Colonic mucosa (tissue), 4 donors: ENCODE measurements at regions of chrX and their contacts with region 1.

Region 1: GRCh38 chrX:132615391-132616131 is 126.7 kb upstream of the MBNL3 start:
- DNase-seq: peak; percentile 53
- H3K4me3 ChIP-seq: no peak overlapping the region
- H3K27ac ChIP-seq: no peak overlapping the region
- H3K4me1 ChIP-seq: no peaks in the 10 kb centered on the region
- H3K27me3 ChIP-seq: no peaks in the 10 kb centered on the region
- CTCF ChIP-seq: peak; percentile 24

Region 2: GRCh38 chrX:132092439-132093065 is 523.0 kb before region 1 on chrX:
- intact Hi-C with region 1: loop called (anchors 5 kb)
- DNase-seq: peak; percentile 52
- H3K4me3 ChIP-seq: no peak overlapping the region
- H3K27ac ChIP-seq: no peak overlapping the region
- H3K4me1 ChIP-seq: no peaks in the 10 kb centered on the region
- H3K27me3 ChIP-seq: no peaks in the 10 kb centered on the region
- CTCF ChIP-seq: peak; percentile 83

Region 3: DNA sequence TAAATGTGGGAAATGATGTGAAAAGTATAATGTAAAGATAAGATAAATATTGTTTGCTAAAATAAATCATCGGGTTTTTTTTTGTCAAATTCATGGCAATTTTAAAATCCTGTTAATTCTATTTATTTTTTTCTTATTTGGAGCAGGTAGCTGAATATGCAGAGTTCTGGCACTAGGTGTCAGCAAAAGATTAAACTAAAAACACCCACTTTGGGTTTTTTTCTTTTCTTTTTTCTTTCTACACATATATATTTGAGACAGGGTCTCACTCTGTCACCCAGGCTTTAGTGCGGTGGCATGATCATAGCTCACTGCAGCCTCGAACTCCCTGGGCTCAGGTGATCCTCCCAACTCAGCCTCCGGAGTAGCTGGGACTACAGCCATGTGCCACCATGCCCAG is 389.4 kb before region 1 on chrX:
- intact Hi-C with region 1: loop called (anchors 5 kb)
- DNase-seq: no peak
- H3K4me3 ChIP-seq: no peak overlapping the region
- H3K27ac ChIP-seq: no peak overlapping the region
- H3K4me1 ChIP-seq: no peaks in the 10 kb centered on the region
- H3K27me3 ChIP-seq: no peaks in the 10 kb centered on the region
- CTCF ChIP-seq: peak; percentile 13

Region 4: GRCh38 chrX:132292793-132293192 is 322.8 kb before region 1 on chrX:
- intact Hi-C with region 1: loop called (anchors 5 kb)
- DNase-seq: peak; percentile 24
- H3K4me3 ChIP-seq: no peak overlapping the region
- H3K27ac ChIP-seq: no peak overlapping the region
- H3K4me1 ChIP-seq: no peaks in the 10 kb centered on the region
- H3K27me3 ChIP-seq: no peaks in the 10 kb centered on the region
- CTCF ChIP-seq: peak; percentile 63

Region 5: DNA sequence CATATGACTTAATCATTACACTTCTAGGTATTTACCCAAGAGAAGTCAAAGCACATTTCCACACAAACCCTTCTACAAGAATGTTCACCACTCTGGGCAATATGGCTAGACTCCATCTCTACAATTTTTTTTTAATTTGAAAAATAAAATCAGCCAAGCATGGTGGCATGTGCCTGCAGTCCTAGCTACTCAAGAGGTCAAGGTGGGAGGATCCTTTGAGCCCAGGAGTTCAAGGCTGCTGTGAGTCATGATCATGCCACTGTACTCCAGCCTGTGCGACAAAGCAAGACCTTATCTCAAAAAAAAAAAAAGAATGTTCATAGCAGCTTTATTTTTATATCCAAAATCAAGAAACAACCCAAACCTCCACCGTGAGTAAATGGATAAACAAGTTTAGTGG is 56.5 kb before region 1 on chrX:
- intact Hi-C with region 1: no loop called
- DNase-seq: no peak
- H3K4me3 ChIP-seq: no peak overlapping the region
- H3K27ac ChIP-seq: no peak overlapping the region
- H3K4me1 ChIP-seq: no peaks in the 10 kb centered on the region
- H3K27me3 ChIP-seq: peaks cover 5% of the 10 kb centered on the region
- CTCF ChIP-seq: no peak

Region 6: GRCh38 chrX:132751063-132751690 is 135.6 kb after region 1 on chrX:
- intact Hi-C with region 1: no loop called
- DNase-seq: no peak
- H3K4me3 ChIP-seq: no peak overlapping the region
- H3K27ac ChIP-seq: no peak overlapping the region
- H3K4me1 ChIP-seq: no peaks in the 10 kb centered on the region
- H3K27me3 ChIP-seq: no peaks in the 10 kb centered on the region
- CTCF ChIP-seq: no peak